ENCODE measurements at regions of chr10 and their contacts with region 1.

Region 1: GRCh38 chr10:72260588-72261322 is 13.0 kb upstream of the DDIT4 start:
- DNase-seq: peak; percentile 81
- H3K4me3 Mint-ChIP-seq: peak overlapping the region; percentile 86
- H3K27ac Mint-ChIP-seq: peak overlapping the region; percentile 98
- H3K4me1 Mint-ChIP-seq: peaks cover 67% of the 10 kb centered on the region
- H3K27me3 Mint-ChIP-seq: no peaks in the 10 kb centered on the region

Region 2: DNA sequence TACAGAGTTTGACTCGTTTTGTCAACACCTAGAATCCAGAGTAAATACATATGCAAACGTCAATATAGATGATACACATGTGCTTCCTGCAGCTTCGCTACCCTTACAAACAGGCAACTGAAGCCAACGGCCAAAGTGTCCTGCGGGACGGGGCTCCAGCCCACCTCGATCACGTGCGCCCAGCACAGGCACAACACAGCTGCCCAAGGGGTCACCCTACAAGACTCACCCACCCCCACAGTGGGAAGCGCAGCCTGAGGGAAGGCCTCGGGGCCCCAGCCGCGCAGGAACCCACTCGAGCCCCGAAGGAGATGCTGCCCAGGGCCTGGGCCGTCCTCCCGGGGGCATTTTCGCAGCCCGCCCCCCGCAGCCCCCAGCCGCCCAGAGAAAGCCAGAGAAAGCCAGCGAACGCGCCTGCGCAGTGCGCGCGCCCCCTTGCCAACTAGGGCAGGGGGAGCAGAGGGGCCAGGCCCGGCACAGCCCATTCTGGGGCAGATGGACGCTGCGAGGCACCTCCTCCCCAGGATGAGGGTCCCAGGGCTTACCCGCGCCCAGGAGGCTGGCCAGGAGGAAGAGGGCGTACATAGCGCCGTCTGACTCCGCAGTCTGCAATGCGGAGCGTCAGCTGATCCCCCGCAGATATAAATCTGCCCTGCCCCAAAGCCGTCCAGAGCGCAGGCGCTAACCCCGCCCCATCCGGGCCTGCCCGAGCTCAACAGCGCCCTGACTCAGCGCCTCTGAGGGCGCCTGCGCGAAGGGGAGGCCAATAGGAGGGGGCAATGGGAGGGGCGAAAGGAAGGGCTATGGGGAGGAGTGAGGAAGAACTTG is 409.9 kb before region 1 on chr10 and contains the start of gene PSAP:
- intact Hi-C with region 1: loop called (anchors 5 kb)
- DNase-seq: peak; percentile 99
- H3K4me3 Mint-ChIP-seq: peak within 1 kb of the TSS; percentile 97
- H3K27ac Mint-ChIP-seq: peak within 1 kb of the TSS; percentile 85
- H3K4me1 Mint-ChIP-seq: peaks cover 42% of the 10 kb centered on the region
- H3K27me3 Mint-ChIP-seq: no peaks in the 10 kb centered on the region
- total RNA-seq, gene PSAP: 117 and 122 TPM in 2 replicates

Region 3: DNA sequence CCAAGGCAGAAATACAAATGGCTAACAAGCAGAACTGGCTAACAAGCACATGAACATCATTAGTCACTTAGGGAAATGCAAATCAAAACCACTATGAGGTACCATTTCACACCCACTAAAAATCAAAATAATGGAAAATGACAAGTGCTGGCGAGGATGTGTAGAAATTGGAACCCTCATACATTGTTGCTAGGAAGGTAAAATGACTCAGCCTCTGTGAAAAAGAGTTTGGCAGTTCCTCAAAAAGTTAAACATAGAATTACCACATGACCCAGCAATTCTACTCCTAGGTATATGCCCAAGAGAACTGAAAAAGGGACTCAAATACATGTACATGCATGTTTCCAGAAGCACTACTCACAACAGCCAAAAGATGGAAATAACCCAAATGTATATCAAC is 97.8 kb before region 1 on chr10:
- intact Hi-C with region 1: loop called (anchors 1 kb)
- DNase-seq: no peak
- H3K4me3 Mint-ChIP-seq: peak overlapping the region; percentile 57
- H3K27ac Mint-ChIP-seq: peak overlapping the region; percentile 80
- H3K4me1 Mint-ChIP-seq: peaks cover 27% of the 10 kb centered on the region
- H3K27me3 Mint-ChIP-seq: no peaks in the 10 kb centered on the region

Region 4: GRCh38 chr10:72248468-72249151 is 12.1 kb before region 1 on chr10:
- intact Hi-C with region 1: loop called (anchors 1 kb)
- DNase-seq: peak; percentile 75
- H3K4me3 Mint-ChIP-seq: peak overlapping the region; percentile 76
- H3K27ac Mint-ChIP-seq: peak overlapping the region; percentile 98
- H3K4me1 Mint-ChIP-seq: peaks cover 83% of the 10 kb centered on the region
- H3K27me3 Mint-ChIP-seq: no peaks in the 10 kb centered on the region

Region 5: GRCh38 chr10:72292223-72292691 is 31.5 kb after region 1 on chr10:
- intact Hi-C with region 1: loop called (anchors 1 kb)
- DNase-seq: no peak
- H3K4me3 Mint-ChIP-seq: peak overlapping the region; percentile 45
- H3K27ac Mint-ChIP-seq: peak overlapping the region; percentile 100
- H3K4me1 Mint-ChIP-seq: peaks cover 59% of the 10 kb centered on the region
- H3K27me3 Mint-ChIP-seq: no peaks in the 10 kb centered on the region

Region 6: GRCh38 chr10:72319416-72320254 is 58.9 kb after region 1 on chr10:
- intact Hi-C with region 1: loop called (anchors 1 kb)
- DNase-seq: peak; percentile 84
- H3K4me3 Mint-ChIP-seq: peak overlapping the region; percentile 80
- H3K27ac Mint-ChIP-seq: peak overlapping the region; percentile 98
- H3K4me1 Mint-ChIP-seq: peaks cover 70% of the 10 kb centered on the region
- H3K27me3 Mint-ChIP-seq: no peaks in the 10 kb centered on the region